ENCODE measurements at regions of chr1 and their contacts with region 1.

Region 1: GRCh38 chr1:8560611-8561544 is 243.0 kb downstream of the SLC45A1 start:
- DNase-seq: peak; percentile 15 to 55
- ATAC-seq: peak; percentile 73 to 76; a peak in 5 of 6 replicates
- H3K4me3 ChIP-seq: no peak overlapping the region
- H3K27ac ChIP-seq: peak overlapping the region in 1 of 2 experiments; percentile 29; a peak in 1 of 6 replicates
- H3K4me1 ChIP-seq: peaks cover 39% of the 10 kb centered on the region
- CTCF ChIP-seq: peak; percentile 79
- EP300 ChIP-seq: no peak
- POLR2A ChIP-seq: no peak
- RAD21 ChIP-seq: peak; percentile 82 to 86

Region 2: GRCh38 chr1:8571200-8571984 is 10.5 kb after region 1 on chr1:
- CTCF ChIA-PET with region 1: interaction called, 20 read pairs
- POLR2A ChIA-PET with region 1: interaction called, 3 read pairs
- DNase-seq: peak in 1 of 2 experiments; percentile 20
- ATAC-seq: peak in 1 of 2 experiments; percentile 63; a peak in 2 of 6 replicates
- H3K4me3 ChIP-seq: no peak overlapping the region
- H3K27ac ChIP-seq: 0 out of 6 replicates have a peak overlapping the region, but pooled peaks of 1 of the 2 experiments have one; percentile 43
- H3K4me1 ChIP-seq: peaks cover 39% of the 10 kb centered on the region
- CTCF ChIP-seq: peak; percentile 44
- EP300 ChIP-seq: no peak
- POLR2A ChIP-seq: no peak
- RAD21 ChIP-seq: no peak

Region 3: GRCh38 chr1:8671306-8671917 is 110.5 kb after region 1 on chr1:
- CTCF ChIA-PET with region 1: interaction called, 14 read pairs
- POLR2A ChIA-PET with region 1: interaction called, 3 read pairs
- DNase-seq: peak; percentile 61 to 64
- ATAC-seq: peak; percentile 56 to 65; a peak in 3 of 6 replicates
- H3K4me3 ChIP-seq: no peak overlapping the region
- H3K27ac ChIP-seq: peak overlapping the region in 1 of 2 experiments; percentile 42; a peak in 2 of 6 replicates
- H3K4me1 ChIP-seq: peaks cover 87% of the 10 kb centered on the region
- CTCF ChIP-seq: peak; percentile 61
- EP300 ChIP-seq: no peak
- POLR2A ChIP-seq: no peak
- RAD21 ChIP-seq: peak; percentile 64 to 66

Region 4: GRCh38 chr1:8702850-8703810 is 142.3 kb after region 1 on chr1:
- CTCF ChIA-PET with region 1: interaction called, 12 read pairs
- POLR2A ChIA-PET with region 1: no interaction called
- DNase-seq: peak; percentile 74 to 92
- ATAC-seq: peak; percentile 86 to 96
- H3K4me3 ChIP-seq: peak overlapping the region; percentile 71
- H3K27ac ChIP-seq: peak overlapping the region; percentile 91 to 98
- H3K4me1 ChIP-seq: peaks cover 60% of the 10 kb centered on the region
- CTCF ChIP-seq: no peak
- EP300 ChIP-seq: no peak
- POLR2A ChIP-seq: peak; percentile 72
- RAD21 ChIP-seq: peak; percentile 11 to 47; a peak in 2 of 5 replicates

Region 5: DNA sequence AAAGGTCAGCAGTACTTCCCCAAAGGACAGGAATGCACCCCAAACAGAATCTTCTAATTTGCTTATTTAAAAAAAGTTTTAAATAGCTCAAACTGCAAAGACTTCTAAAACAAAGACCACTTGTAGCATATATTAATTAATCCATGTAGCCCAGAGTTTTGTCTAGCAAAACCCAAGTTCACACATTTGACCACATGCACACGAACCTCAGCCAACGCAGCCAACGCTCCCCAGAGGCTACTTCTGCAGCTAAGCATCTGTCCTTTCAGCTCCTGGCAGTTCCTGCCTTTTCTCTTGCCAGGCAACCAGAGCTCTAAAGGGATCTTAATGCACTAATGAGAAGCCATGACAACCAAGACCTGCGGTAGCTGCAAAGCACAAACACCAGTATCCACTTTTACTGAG is 166.9 kb after region 1 on chr1:
- CTCF ChIA-PET with region 1: interaction called, 50 read pairs
- POLR2A ChIA-PET with region 1: no interaction called
- DNase-seq: no peak
- ATAC-seq: no peak
- H3K4me3 ChIP-seq: no peak overlapping the region
- H3K27ac ChIP-seq: no peak overlapping the region
- H3K4me1 ChIP-seq: peaks cover 13% of the 10 kb centered on the region; the same call in 2 of the 3 replicates
- CTCF ChIP-seq: no peak
- EP300 ChIP-seq: no peak
- POLR2A ChIP-seq: no peak
- RAD21 ChIP-seq: no peak